ENCODE measurements at regions of chr5 and their contacts with region 1.

Region 1: GRCh38 chr5:148963664-148964063 is 99.2 kb downstream of the SH3TC2 start:
- DNase-seq: no peak
- H3K4me3 ChIP-seq: no peak overlapping the region
- H3K27ac ChIP-seq: no peak overlapping the region
- H3K4me1 ChIP-seq: peaks cover 16% of the 10 kb centered on the region
- H3K27me3 ChIP-seq: no peaks in the 10 kb centered on the region
- CTCF ChIP-seq: no peak
- POLR2A ChIP-seq: no peak

Region 2: GRCh38 chr5:148542812-148543211 is 420.9 kb before region 1 on chr5:
- CTCF ChIA-PET with region 1: no interaction called
- POLR2A ChIA-PET with region 1: no interaction called
- dilution Hi-C with region 1: no loop called
- intact Hi-C with region 1: no loop called
- DNase-seq: no peak
- H3K4me3 ChIP-seq: no peak overlapping the region
- H3K27ac ChIP-seq: no peak overlapping the region
- H3K4me1 ChIP-seq: no peaks in the 10 kb centered on the region
- H3K27me3 ChIP-seq: peaks cover 2 to 4% of the 10 kb centered on the region in 2 experiments
- CTCF ChIP-seq: no peak
- POLR2A ChIP-seq: no peak

Region 3: DNA sequence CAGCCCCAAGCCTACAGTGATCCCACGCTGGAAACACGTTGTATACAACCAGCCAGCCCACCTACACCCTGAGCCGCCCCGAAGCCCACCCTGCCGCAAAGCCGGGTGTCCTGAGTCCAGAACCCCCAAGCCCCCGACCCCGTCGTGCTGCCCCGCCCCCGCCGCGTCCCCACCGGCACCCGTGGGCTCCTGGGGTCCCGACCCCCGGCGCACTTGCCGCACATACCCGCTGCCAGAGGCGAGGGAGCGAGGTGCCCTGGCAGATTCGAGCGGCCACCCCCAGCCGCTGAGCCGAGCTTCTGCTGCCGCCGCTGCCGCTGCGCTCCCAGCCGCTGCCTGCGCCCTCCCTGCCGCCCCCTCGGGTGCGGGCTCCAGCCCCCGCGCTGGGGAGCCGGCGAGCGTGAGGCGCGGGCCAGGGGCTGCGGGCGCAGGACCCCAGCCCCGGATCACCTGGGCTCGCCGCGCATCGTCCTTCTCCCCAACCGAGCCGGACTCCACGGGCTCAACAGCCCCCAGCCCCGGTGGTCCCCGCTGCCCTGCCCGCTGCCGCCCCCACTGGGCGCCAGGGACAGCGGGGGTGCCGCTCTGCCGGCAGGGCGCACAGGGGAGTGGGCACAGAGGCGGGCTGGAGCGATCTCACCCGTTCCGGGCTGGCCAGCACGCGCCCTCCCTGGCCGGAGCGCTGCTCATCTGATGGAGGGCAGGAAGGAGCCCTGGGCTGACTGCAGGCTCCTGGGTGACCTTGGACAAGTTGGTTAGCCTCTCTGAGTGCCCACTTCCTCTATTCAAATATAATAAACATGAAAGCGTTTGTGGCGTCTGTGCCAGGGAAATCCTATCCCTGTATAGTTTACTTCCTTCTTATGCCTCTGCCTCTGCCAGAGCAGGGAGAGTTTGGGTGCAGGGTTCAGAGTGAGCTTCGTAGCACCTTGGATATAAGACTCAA is 309.6 kb before region 1 on chr5 and contains the start of gene HTR4:
- CTCF ChIA-PET with region 1: no interaction called
- POLR2A ChIA-PET with region 1: no interaction called
- dilution Hi-C with region 1: no loop called
- intact Hi-C with region 1: no loop called
- DNase-seq: no peak
- H3K4me3 ChIP-seq: no peak within 1 kb of the TSS
- H3K27ac ChIP-seq: no peak within 1 kb of the TSS
- H3K4me1 ChIP-seq: no peaks in the 10 kb centered on the region
- H3K27me3 ChIP-seq: peaks cover 42 to 50% of the 10 kb centered on the region in 2 experiments
- CTCF ChIP-seq: no peak
- POLR2A ChIP-seq: no peak
- total RNA-seq, gene HTR4: not detected in 2 replicates

Region 4: GRCh38 chr5:148979104-148979723 is 15.6 kb after region 1 on chr5:
- CTCF ChIA-PET with region 1: interaction called, 55 read pairs
- POLR2A ChIA-PET with region 1: interaction called, 3 read pairs
- dilution Hi-C with region 1: no loop called
- intact Hi-C with region 1: loop called (anchors 1 kb)
- DNase-seq: no peak
- H3K4me3 ChIP-seq: no peak overlapping the region
- H3K27ac ChIP-seq: no peak overlapping the region
- H3K4me1 ChIP-seq: peaks cover 28% of the 10 kb centered on the region
- H3K27me3 ChIP-seq: no peaks in the 10 kb centered on the region
- CTCF ChIP-seq: no peak
- POLR2A ChIP-seq: no peak

Region 5: DNA sequence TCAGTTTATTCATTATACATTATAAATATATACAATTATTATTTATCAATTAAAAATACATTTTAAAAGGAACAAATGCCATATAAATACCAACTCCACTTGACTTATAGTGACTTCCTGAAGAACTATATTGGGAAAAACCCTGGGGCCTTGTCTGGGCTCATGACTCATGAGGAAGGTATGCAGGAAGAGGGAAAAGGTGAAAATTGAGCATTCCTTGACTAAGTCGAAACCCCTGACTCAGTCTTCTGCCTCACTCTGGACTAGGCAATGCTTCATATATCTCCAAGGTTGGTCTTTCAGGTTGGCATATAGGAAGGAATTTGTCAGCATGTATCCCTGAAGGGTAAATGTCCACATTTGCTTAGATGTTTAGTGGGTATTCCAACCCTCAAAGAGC is 20.7 kb after region 1 on chr5:
- CTCF ChIA-PET with region 1: interaction called, 32 read pairs
- POLR2A ChIA-PET with region 1: no interaction called
- dilution Hi-C with region 1: no loop called
- intact Hi-C with region 1: loop called (anchors 1 kb)
- DNase-seq: peak; percentile 52
- H3K4me3 ChIP-seq: no peak overlapping the region
- H3K27ac ChIP-seq: peak overlapping the region; percentile 61
- H3K4me1 ChIP-seq: peaks cover 15% of the 10 kb centered on the region
- H3K27me3 ChIP-seq: no peaks in the 10 kb centered on the region
- CTCF ChIP-seq: no peak
- POLR2A ChIP-seq: no peak